ENCODE measurements at regions of chr12 and their contacts with region 1.

Region 1: GRCh38 chr12:75334384-75335030 is at the start of gene GLIPR1L1:
- DNase-seq: peak; percentile 71
- ATAC-seq: peak; percentile 83
- H3K4me3 ChIP-seq: no peak within 1 kb of the TSS; a peak in 1 of 6 replicates
- H3K27ac ChIP-seq: no peak within 1 kb of the TSS
- H3K4me1 ChIP-seq: no peaks in the 10 kb centered on the region
- H3K27me3 ChIP-seq: no peaks in the 10 kb centered on the region
- CTCF ChIP-seq: peak; percentile 91
- EP300 ChIP-seq: no peak
- POLR2A ChIP-seq: no peak
- RAD21 ChIP-seq: peak; percentile 46; the same call in 1 of the 2 replicates
- total RNA-seq, gene GLIPR1L1: not detected in 2 replicates

Region 2: GRCh38 chr12:75162873-75163272 is 171.6 kb before region 1 on chr12:
- CTCF ChIA-PET with region 1: no interaction called
- POLR2A ChIA-PET with region 1: no interaction called
- in situ Hi-C with region 1: no loop called
- intact Hi-C with region 1: loop called (anchors 10 kb)
- DNase-seq: no peak
- ATAC-seq: no peak
- H3K4me3 ChIP-seq: no peak overlapping the region
- H3K27ac ChIP-seq: no peak overlapping the region
- H3K4me1 ChIP-seq: no peaks in the 10 kb centered on the region
- H3K27me3 ChIP-seq: no peaks in the 10 kb centered on the region
- CTCF ChIP-seq: no peak
- EP300 ChIP-seq: no peak
- POLR2A ChIP-seq: no peak
- RAD21 ChIP-seq: no peak

Region 3: DNA sequence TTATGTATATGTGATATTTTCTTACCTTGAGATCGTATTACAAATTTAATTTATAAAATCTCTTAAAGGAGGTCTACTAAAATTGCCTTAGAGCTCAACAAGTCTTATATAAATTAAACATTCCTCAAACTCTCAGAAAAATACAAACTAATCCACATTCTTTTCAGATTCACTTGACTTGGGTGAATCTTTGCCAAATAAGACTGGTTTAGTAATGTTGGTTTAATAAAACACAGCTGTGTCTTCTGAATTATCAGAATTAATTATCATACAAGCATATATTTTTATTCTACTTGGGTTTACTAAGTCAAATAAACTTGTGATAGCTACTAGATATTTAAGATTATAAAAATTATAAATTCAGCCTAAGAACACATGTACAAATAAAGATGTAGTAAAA is 69.7 kb after region 1 on chr12:
- CTCF ChIA-PET with region 1: no interaction called
- POLR2A ChIA-PET with region 1: no interaction called
- in situ Hi-C with region 1: no loop called
- intact Hi-C with region 1: no loop called
- DNase-seq: no peak
- ATAC-seq: no peak
- H3K4me3 ChIP-seq: no peak overlapping the region
- H3K27ac ChIP-seq: no peak overlapping the region
- H3K4me1 ChIP-seq: no peaks in the 10 kb centered on the region
- H3K27me3 ChIP-seq: no peaks in the 10 kb centered on the region; a peak in 1 of 5 replicates
- CTCF ChIP-seq: no peak
- EP300 ChIP-seq: no peak
- POLR2A ChIP-seq: no peak
- RAD21 ChIP-seq: no peak

Region 4: GRCh38 chr12:75505706-75506312 is 171.3 kb after region 1 on chr12:
- CTCF ChIA-PET with region 1: interaction called, 9 read pairs
- POLR2A ChIA-PET with region 1: no interaction called
- in situ Hi-C with region 1: loop called (anchors 10 kb)
- intact Hi-C with region 1: loop called (anchors 1 kb)
- DNase-seq: peak; percentile 9
- ATAC-seq: peak; percentile 46; the same call in 2 of the 3 replicates
- H3K4me3 ChIP-seq: no peak overlapping the region
- H3K27ac ChIP-seq: no peak overlapping the region
- H3K4me1 ChIP-seq: peaks cover 31% of the 10 kb centered on the region
- H3K27me3 ChIP-seq: no peaks in the 10 kb centered on the region; a peak in 1 of 5 replicates
- CTCF ChIP-seq: peak; percentile 47
- EP300 ChIP-seq: no peak
- POLR2A ChIP-seq: no peak
- RAD21 ChIP-seq: no peak

Region 5: DNA sequence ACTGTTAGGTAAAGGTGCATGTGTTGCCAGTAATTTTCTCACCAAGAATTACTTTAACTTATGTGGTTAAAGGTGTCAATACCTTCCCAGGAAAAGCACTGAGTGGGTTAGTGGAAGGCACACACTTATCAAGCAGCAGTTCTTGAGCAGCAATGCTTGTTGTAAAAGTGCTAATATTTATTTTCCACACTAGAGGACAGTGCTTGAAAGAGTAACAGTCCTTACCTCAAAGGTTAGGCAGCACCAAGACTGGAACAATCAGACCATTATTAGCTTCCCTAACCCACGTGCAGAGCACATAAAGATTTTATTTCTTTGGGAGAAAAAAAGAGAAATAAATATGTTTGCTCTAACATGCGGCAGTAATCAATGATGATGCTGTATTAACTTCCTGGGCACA is 225.7 kb after region 1 on chr12:
- CTCF ChIA-PET with region 1: no interaction called
- POLR2A ChIA-PET with region 1: no interaction called
- in situ Hi-C with region 1: no loop called
- intact Hi-C with region 1: no loop called
- DNase-seq: peak; percentile 68
- ATAC-seq: peak; percentile 87
- H3K4me3 ChIP-seq: no peak overlapping the region
- H3K27ac ChIP-seq: no peak overlapping the region
- H3K4me1 ChIP-seq: peaks cover 55% of the 10 kb centered on the region
- H3K27me3 ChIP-seq: no peaks in the 10 kb centered on the region
- CTCF ChIP-seq: peak; percentile 83
- EP300 ChIP-seq: no peak
- POLR2A ChIP-seq: no peak
- RAD21 ChIP-seq: peak; percentile 58; the same call in 1 of the 2 replicates

Measured in HepG2 (cell line).